GM12878 (cell line): ENCODE measurements at regions of chr10 and their contacts with region 1.

Region 1: DNA sequence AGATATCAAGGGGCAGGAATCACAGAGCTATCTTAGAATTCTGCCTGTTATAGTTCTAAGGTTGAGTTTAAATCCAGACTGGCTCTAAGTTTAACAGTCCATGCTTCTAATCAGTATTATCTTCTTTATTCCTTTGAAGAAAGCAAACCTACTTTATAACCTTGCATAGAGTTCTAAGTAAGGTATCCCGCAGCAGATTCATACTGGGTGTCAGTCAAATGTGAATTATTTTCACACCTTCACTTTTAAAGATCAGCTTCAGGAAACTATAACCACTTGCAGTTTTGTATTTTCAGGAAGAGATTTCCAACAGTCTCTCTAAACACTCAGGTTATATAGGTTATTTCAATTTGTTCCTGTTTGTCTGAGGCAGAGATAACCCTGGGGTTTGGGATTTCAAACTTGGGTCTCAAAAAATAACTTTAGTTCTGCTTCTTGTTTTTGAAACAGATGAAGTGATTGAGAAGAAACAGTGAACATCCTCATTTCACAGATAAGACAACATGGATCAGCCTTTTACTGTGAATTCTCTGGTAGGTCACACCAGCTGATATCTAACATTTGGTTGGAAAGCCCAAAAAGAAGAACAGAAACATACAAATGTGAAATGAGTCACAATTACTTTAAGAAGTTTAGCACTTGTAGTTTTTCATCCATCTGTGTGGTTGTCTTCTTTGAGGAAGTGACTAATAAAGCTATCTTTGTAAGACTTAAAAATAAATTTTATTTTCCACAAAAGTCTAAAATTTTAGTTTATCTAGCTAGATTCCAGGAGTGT is 21.4 kb downstream of the STAMBPL1 start:
- DNase-seq: peak; percentile 94
- ATAC-seq: peak; percentile 89
- H3K4me3 ChIP-seq: peak overlapping the region; percentile 26; the same call in 1 of the 2 replicates
- H3K27ac ChIP-seq: peak overlapping the region; percentile 99
- H3K4me1 ChIP-seq: peaks cover 50% of the 10 kb centered on the region
- H3K27me3 ChIP-seq: no peaks in the 10 kb centered on the region
- CTCF ChIP-seq: no peak
- EP300 ChIP-seq: peak; percentile 84 to 97
- POLR2A ChIP-seq: no peak
- RAD21 ChIP-seq: peak; percentile 15; the same call in 1 of the 2 replicates

Region 2: GRCh38 chr10:88841316-88842111 is 59.9 kb before region 1 on chr10:
- CTCF ChIA-PET with region 1: interaction called, 93 read pairs
- POLR2A ChIA-PET with region 1: interaction called, 11 read pairs
- RAD21 ChIA-PET with region 1: interaction called, 67 read pairs
- SMC1A ChIA-PET with region 1: interaction called, 111 read pairs
- in situ Hi-C with region 1: no loop called
- intact Hi-C with region 1: no loop called
- DNase-seq: no peak
- ATAC-seq: no peak
- H3K4me3 ChIP-seq: no peak overlapping the region
- H3K27ac ChIP-seq: no peak overlapping the region
- H3K4me1 ChIP-seq: peaks cover 5% of the 10 kb centered on the region; the same call in 1 of the 2 replicates
- H3K27me3 ChIP-seq: no peaks in the 10 kb centered on the region
- CTCF ChIP-seq: no peak
- EP300 ChIP-seq: no peak
- POLR2A ChIP-seq: no peak
- RAD21 ChIP-seq: no peak

Region 3: DNA sequence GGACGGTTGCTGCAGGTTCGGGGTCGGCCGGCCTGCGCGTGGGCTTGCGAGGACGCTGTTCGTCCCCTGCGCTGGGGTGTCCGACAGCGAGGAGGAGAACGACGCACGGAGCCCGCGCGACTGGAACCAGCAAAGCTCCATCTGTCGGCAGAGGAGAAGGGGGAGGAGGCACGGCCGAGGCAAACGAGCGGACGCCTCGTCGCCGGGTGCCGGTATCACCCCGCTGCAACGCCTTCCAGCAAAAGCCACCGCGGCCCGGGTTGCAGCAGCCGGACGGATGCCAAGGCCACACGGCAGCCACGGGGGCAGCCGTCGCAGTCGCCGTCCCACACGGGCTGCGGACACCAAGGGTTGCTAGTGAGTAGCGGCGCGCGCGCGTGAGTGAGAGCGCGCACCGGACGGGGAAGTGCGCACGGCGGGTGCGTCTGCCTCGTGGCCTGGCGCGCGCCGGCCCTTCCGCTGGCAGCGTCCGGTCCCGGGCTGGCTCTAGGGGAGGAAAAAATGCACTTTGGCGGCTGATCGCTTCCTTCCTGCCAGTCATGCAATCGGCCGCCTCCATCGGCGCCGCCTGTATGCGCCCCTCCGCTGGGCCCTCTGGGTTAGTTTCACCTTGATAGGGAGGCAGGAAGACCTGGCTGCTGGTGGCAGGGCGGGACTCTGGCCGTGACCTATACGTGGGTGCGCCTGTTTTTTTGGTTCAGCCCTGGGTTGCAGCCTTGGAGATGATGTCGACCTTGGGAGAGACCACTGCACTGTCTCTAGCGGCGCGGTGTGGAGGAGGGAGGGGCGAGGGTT is 20.9 kb before region 1 on chr10:
- CTCF ChIA-PET with region 1: interaction called, 116 read pairs
- POLR2A ChIA-PET with region 1: interaction called, 248 read pairs
- RAD21 ChIA-PET with region 1: interaction called, 249 read pairs
- SMC1A ChIA-PET with region 1: interaction called, 329 read pairs
- in situ Hi-C with region 1: no loop called
- intact Hi-C with region 1: loop called (anchors 2 kb)
- DNase-seq: peak; percentile 70
- ATAC-seq: peak; percentile 84
- H3K4me3 ChIP-seq: peak overlapping the region; percentile 89
- H3K27ac ChIP-seq: peak overlapping the region; percentile 82
- H3K4me1 ChIP-seq: peaks cover 20% of the 10 kb centered on the region
- H3K27me3 ChIP-seq: no peaks in the 10 kb centered on the region
- CTCF ChIP-seq: peak in 2 of 3 experiments; percentile 22 to 23; a peak in 3 of 6 replicates
- EP300 ChIP-seq: 0 out of 4 replicates have a peak, but pooled peaks of 1 of the 2 experiments have one; percentile 36
- POLR2A ChIP-seq: peak; percentile 96
- RAD21 ChIP-seq: 0 out of 2 replicates have a peak, but pooled peaks have one; percentile 5

Region 4: DNA sequence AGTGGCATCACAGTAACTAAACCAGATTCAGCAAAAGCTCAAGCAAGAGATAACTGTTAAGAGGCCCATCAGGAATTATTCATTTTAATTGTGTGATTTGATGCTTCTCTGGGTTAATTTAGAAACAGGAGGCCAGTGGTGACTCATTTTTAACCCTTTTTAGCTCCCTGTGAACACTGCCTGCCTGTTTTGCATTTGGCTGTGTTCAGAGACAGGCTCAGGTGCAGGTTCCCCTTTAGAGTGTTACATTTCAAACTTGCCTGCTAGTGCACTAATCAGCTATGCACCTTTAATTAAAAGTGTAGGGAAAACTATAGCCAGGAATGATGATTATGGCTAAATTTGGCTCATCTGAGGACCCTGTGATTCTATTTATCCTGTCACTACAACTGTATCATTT is 14.8 kb before region 1 on chr10:
- CTCF ChIA-PET with region 1: interaction called, 116 read pairs
- POLR2A ChIA-PET with region 1: interaction called, 248 read pairs
- RAD21 ChIA-PET with region 1: interaction called, 249 read pairs
- SMC1A ChIA-PET with region 1: interaction called, 329 read pairs
- in situ Hi-C with region 1: no loop called
- intact Hi-C with region 1: loop called (anchors 1 kb)
- DNase-seq: no peak
- ATAC-seq: peak; percentile 76
- H3K4me3 ChIP-seq: peak overlapping the region; percentile 55
- H3K27ac ChIP-seq: peak overlapping the region; percentile 61
- H3K4me1 ChIP-seq: peaks cover 46% of the 10 kb centered on the region
- H3K27me3 ChIP-seq: no peaks in the 10 kb centered on the region
- CTCF ChIP-seq: no peak
- EP300 ChIP-seq: no peak
- POLR2A ChIP-seq: 0 out of 2 replicates have a peak, but pooled peaks have one; percentile 26
- RAD21 ChIP-seq: no peak